Prostate gland (tissue), 2 donors: ENCODE measurements at regions of chr13 and their contacts with region 1.

Region 1: GRCh38 chr13:29513397-29514322 is 81.8 kb downstream of the SLC7A1 start:
- DNase-seq: no peak
- H3K4me3 ChIP-seq: no peak overlapping the region
- H3K27ac ChIP-seq: no peak overlapping the region
- H3K4me1 ChIP-seq: no peaks in the 10 kb centered on the region
- H3K27me3 ChIP-seq: no peaks in the 10 kb centered on the region
- CTCF ChIP-seq: no peak
- POLR2A ChIP-seq: no peak

Region 2: DNA sequence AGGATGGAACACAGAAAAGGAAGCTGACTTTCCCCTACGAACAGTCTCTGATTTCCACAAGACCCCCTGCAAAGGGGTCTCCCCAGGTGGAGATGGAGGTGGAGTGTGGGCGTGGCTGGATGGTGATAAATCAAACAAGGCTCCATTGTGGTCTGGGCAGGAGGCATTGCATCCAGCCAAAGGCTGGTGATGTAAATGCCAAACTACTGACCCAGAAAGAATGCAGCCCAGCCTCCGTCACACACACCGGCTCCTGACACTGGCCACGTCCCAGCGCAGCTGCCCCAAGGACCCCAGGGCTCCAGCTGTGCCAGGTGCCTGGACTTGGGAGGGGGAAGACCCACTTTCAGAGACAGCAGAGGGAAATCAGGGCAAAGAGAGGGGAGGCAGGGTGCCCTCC is 75.6 kb after region 1 on chr13:
- intact Hi-C with region 1: loop called (anchors 5 kb)
- DNase-seq: no peak
- H3K4me3 ChIP-seq: no peak overlapping the region
- H3K27ac ChIP-seq: peak overlapping the region; percentile 23 to 54
- H3K4me1 ChIP-seq: peaks cover 8% of the 10 kb centered on the region
- H3K27me3 ChIP-seq: no peaks in the 10 kb centered on the region
- CTCF ChIP-seq: no peak
- POLR2A ChIP-seq: no peak